ENCODE measurements at regions of chr1 and their contacts with region 1.

Region 1: DNA sequence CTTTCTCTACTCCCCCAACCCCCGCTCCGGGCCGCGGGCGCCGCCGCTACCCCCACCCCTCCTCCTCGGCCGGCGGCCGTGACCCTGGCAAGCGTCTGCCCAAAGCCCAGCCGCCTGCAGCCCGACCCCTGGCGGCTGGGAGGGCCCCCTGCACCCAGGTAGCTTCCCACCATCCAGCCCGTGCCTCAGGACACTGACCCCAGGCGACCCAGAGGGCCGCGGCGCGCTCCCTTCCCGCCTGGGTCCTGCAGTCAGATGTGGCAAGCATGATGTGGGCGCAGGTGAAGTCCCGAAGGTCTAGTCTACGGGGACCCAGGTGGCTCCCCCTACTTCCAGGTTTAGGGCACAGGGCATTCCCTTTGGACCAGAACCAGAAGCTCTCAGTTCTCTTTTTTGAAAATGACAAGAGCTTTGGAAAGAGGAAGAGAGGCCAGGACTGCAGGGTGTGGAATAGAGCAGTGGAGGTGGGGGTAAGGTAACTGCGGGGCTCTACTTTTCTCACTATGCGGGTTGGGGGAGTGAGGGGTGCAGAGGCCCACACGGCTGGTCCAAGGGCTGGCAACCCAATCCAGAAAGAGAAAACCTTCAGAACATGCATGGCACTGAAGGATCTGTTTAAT is at the start of gene DENND4B:
- DNase-seq: peak; percentile 55 to 89 (median 70)
- ATAC-seq: peak; percentile 57
- H3K4me3 ChIP-seq: peak within 1 kb of the TSS; percentile 84
- H3K4me3 Mint-ChIP-seq: peak within 1 kb of the TSS; percentile 89
- H3K27ac ChIP-seq: peak within 1 kb of the TSS; percentile 92 to 94
- H3K27ac Mint-ChIP-seq: peak within 1 kb of the TSS; percentile 86
- H3K4me1 ChIP-seq: peaks cover 50% of the 10 kb centered on the region
- H3K4me1 Mint-ChIP-seq: peaks cover 38% of the 10 kb centered on the region
- H3K27me3 ChIP-seq: no peaks in the 10 kb centered on the region
- H3K27me3 Mint-ChIP-seq: no peaks in the 10 kb centered on the region
- CTCF ChIP-seq: peak; percentile 88
- total RNA-seq, gene DENND4B: 87.0 to 98.7 TPM

Region 2: GRCh38 chr1:153783233-153784190 is 163.2 kb before region 1 on chr1:
- CTCF ChIA-PET with region 1: no interaction called
- POLR2A ChIA-PET with region 1: interaction called, 12 read pairs
- intact Hi-C with region 1: no loop called
- DNase-seq: peak; percentile 83 to 95 (median 89)
- ATAC-seq: peak; percentile 95
- H3K4me3 ChIP-seq: peak overlapping the region; percentile 73
- H3K4me3 Mint-ChIP-seq: peak overlapping the region; percentile 94
- H3K27ac ChIP-seq: peak overlapping the region; percentile 96 to 97
- H3K27ac Mint-ChIP-seq: peak overlapping the region; percentile 97
- H3K4me1 ChIP-seq: peaks cover 16% of the 10 kb centered on the region
- H3K4me1 Mint-ChIP-seq: peaks cover 11% of the 10 kb centered on the region
- H3K27me3 ChIP-seq: no peaks in the 10 kb centered on the region
- H3K27me3 Mint-ChIP-seq: peaks cover 8% of the 10 kb centered on the region
- CTCF ChIP-seq: no peak

Region 3: DNA sequence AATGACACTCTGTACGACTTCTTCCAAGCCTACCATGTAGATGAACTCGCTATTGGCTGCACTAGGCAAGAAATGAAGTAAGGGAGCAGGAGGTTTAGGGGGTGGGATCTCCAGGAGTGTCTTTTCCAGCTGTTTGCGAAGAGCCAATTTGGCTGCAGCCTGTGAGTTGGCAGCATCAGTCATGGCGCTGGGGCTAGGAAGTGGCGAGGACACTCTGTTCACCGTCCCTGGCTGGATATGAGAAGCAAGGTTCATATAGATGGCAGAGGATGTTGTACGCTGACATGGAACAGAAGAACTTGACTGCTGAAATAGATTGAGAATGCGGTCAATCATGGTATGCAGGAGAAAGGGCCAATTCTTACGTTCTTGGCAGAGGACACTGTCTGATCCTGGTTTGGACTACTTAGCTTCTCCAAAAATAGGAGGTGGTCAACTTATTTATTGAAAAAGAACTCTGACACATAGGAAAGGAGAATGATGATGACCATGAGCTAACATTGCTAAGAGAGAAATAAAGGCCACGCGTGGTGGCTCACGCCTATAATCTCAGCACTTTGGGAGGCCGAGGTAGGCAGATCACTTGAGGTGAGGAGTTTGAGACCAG is 130.3 kb before region 1 on chr1:
- CTCF ChIA-PET with region 1: interaction called, 6 read pairs
- POLR2A ChIA-PET with region 1: no interaction called
- intact Hi-C with region 1: loop called (anchors 2 kb)
- DNase-seq: no peak
- ATAC-seq: no peak
- H3K4me3 ChIP-seq: no peak overlapping the region
- H3K4me3 Mint-ChIP-seq: no peak overlapping the region
- H3K27ac ChIP-seq: no peak overlapping the region
- H3K27ac Mint-ChIP-seq: no peak overlapping the region
- H3K4me1 ChIP-seq: no peaks in the 10 kb centered on the region
- H3K4me1 Mint-ChIP-seq: no peaks in the 10 kb centered on the region
- H3K27me3 ChIP-seq: no peaks in the 10 kb centered on the region
- H3K27me3 Mint-ChIP-seq: no peaks in the 10 kb centered on the region
- CTCF ChIP-seq: no peak

Region 4: DNA sequence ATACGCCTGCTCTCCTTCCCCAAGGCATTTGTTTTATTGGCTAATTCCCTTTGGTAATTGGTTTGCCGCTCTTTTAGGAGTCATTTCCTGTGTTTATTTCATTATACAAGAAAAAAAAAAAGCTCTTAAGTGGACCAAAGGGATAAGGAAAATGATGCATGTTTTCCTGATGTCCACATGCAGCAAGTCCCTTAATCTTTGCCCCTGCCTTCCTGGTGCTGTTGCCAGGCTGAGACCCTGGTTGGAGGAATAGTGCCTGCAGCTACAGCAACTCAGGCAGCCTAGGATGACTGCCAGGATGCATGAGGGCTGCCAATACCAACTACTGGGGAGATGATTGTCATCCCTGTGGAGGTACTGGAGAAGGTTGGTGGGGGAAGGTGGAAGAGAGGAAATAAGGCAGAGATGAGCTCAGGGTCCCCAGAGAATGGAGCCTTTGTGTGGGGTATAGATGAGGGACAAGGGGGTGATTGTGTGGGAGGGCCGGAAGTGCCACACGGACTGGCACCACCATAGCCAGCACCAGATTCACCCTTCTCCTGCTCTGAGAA is 17.9 kb before region 1 on chr1:
- CTCF ChIA-PET with region 1: interaction called, 26 read pairs
- POLR2A ChIA-PET with region 1: interaction called, 143 read pairs
- intact Hi-C with region 1: no loop called
- DNase-seq: no peak
- ATAC-seq: no peak
- H3K4me3 ChIP-seq: no peak overlapping the region
- H3K4me3 Mint-ChIP-seq: no peak overlapping the region
- H3K27ac ChIP-seq: peak overlapping the region in 1 of 2 donors; percentile 10
- H3K27ac Mint-ChIP-seq: peak overlapping the region; percentile 54
- H3K4me1 ChIP-seq: peaks cover 8% of the 10 kb centered on the region
- H3K4me1 Mint-ChIP-seq: peaks cover 12% of the 10 kb centered on the region
- H3K27me3 ChIP-seq: no peaks in the 10 kb centered on the region
- H3K27me3 Mint-ChIP-seq: no peaks in the 10 kb centered on the region
- CTCF ChIP-seq: no peak

Region 5: DNA sequence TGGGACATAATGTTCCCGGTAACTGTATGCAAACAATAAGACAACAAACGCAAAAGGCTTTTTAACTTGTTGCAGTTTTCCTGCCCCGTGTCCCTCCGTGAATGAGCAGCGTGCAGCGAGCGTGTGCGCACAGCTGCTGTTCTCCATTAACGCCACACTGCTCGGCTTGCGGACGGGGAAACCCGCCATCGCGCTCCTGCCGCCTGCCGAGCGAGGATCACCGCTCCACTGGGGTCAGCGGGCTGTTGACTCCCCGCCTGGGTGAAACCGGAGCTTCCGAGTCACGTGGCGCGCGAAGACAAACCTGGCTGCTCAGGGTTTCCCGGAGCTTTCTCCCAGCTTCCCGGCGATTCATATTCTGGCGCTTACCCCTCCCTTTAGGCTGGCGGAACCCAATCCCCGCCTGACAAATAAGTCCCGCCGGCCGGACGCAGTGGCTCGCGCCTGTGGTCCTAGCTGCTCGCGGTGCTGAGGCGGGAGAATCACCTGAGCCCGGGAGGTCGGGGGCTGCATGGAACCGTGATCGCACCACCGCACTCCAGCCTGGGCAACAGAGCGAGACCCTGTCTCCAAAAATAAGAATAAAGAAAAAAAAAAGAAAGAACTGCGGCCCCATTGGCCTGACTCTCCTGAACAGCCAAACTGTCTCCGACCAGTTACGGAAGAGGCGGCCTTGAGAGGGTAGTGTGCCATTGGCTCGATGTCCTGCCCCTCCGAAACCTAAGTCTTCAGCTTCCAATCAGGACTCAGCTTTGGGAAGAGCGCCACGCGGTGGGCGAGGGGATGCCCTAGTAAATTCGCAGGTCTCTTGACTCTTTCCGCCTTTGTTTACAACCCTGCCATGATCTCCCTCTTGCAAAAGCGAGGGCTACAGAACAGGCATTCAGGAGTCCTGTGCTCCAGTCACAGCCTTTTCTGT is 20.6 kb after region 1 on chr1 and contains the start of gene CREB3L4:
- CTCF ChIA-PET with region 1: interaction called, 30 read pairs
- POLR2A ChIA-PET with region 1: interaction called, 84 read pairs
- intact Hi-C with region 1: no loop called
- DNase-seq: peak; percentile 64 to 95 (median 80)
- ATAC-seq: peak; percentile 87
- H3K4me3 ChIP-seq: peak within 1 kb of the TSS; percentile 75
- H3K4me3 Mint-ChIP-seq: peak within 1 kb of the TSS; percentile 96
- H3K27ac ChIP-seq: peak within 1 kb of the TSS; percentile 82 to 83
- H3K27ac Mint-ChIP-seq: peak within 1 kb of the TSS; percentile 94
- H3K4me1 ChIP-seq: peaks cover 60% of the 10 kb centered on the region
- H3K4me1 Mint-ChIP-seq: peaks cover 58% of the 10 kb centered on the region
- H3K27me3 ChIP-seq: no peaks in the 10 kb centered on the region
- H3K27me3 Mint-ChIP-seq: no peaks in the 10 kb centered on the region
- CTCF ChIP-seq: peak; percentile 32
- total RNA-seq, gene CREB3L4: 2.9 to 3.9 TPM